Heart left ventricle (tissue), 16 donors: ENCODE measurements at regions of chr19 and their contacts with region 1.

Region 1: GRCh38 chr19:51473009-51473707 is 5.2 kb upstream of the CEACAM18 start:
- DNase-seq: peak in 4 of 5 donors; percentile 70 to 77 (median 72)
- ATAC-seq: peak; percentile 67 to 82 (median 78)
- H3K4me3 ChIP-seq: no peak overlapping the region
- H3K27ac ChIP-seq: no peak overlapping the region
- H3K4me1 ChIP-seq: peaks cover 0 to under 1% (median 0%) of the 10 kb centered on the region in 12 donors
- H3K27me3 ChIP-seq: peaks cover 0 to 38% (median 8%) of the 10 kb centered on the region in 9 donors
- CTCF ChIP-seq: peak; percentile 77 to 97 (median 86)
- POLR2A ChIP-seq: no peak

Region 2: GRCh38 chr19:51407511-51408131 is 65.5 kb before region 1 on chr19:
- intact Hi-C with region 1: no loop called
- DNase-seq: no peak
- ATAC-seq: peak in 2 of 4 donors; percentile 33 to 72
- H3K4me3 ChIP-seq: no peak overlapping the region
- H3K27ac ChIP-seq: peak overlapping the region in 1 of 12 donors; percentile 75
- H3K4me1 ChIP-seq: peaks cover 0 to 27% (median 0%) of the 10 kb centered on the region in 12 donors
- H3K27me3 ChIP-seq: peaks cover 0 to 3% (median 0%) of the 10 kb centered on the region in 9 donors
- CTCF ChIP-seq: peak in 8 of 12 donors; percentile 15 to 36 (median 24)
- POLR2A ChIP-seq: no peak

Region 3: GRCh38 chr19:51651216-51651846 is 178.2 kb after region 1 on chr19:
- intact Hi-C with region 1: loop called in 6 of 10 experiments (anchors 2 to 5 kb)
- DNase-seq: peak in 2 of 5 donors; percentile 31 to 32
- ATAC-seq: peak in 3 of 4 donors; percentile 28 to 78 (median 28)
- H3K4me3 ChIP-seq: no peak overlapping the region
- H3K27ac ChIP-seq: peak overlapping the region in 1 of 12 donors; percentile 12
- H3K4me1 ChIP-seq: peaks cover 0 to 23% (median 0%) of the 10 kb centered on the region in 12 donors
- H3K27me3 ChIP-seq: peaks cover 0 to 29% (median 0%) of the 10 kb centered on the region in 9 donors
- CTCF ChIP-seq: no peak
- POLR2A ChIP-seq: no peak

Region 4: GRCh38 chr19:51660975-51661600 is 187.9 kb after region 1 on chr19:
- intact Hi-C with region 1: loop called in 9 of 10 experiments (anchors 1 to 5 kb)
- DNase-seq: peak; percentile 70 to 79 (median 76)
- ATAC-seq: peak in 3 of 4 donors; percentile 68 to 86 (median 69)
- H3K4me3 ChIP-seq: no peak overlapping the region
- H3K27ac ChIP-seq: no peak overlapping the region
- H3K4me1 ChIP-seq: peaks cover 0 to 8% (median 0%) of the 10 kb centered on the region in 12 donors
- H3K27me3 ChIP-seq: peaks cover 0 to 40% (median 8%) of the 10 kb centered on the region in 9 donors
- CTCF ChIP-seq: peak; percentile 49 to 72 (median 59)
- POLR2A ChIP-seq: no peak

Region 5: GRCh38 chr19:51784922-51785690 is 311.9 kb after region 1 on chr19:
- intact Hi-C with region 1: loop called in 1 of 10 experiments (anchors 10 kb)
- DNase-seq: peak; percentile 62 to 82 (median 69)
- ATAC-seq: peak; percentile 44 to 91 (median 86)
- H3K4me3 ChIP-seq: no peak overlapping the region
- H3K27ac ChIP-seq: peak overlapping the region in 9 of 12 donors; percentile 9 to 87 (median 49)
- H3K4me1 ChIP-seq: peaks cover 0 to 71% (median 5%) of the 10 kb centered on the region in 12 donors
- H3K27me3 ChIP-seq: no peaks in the 10 kb centered on the region
- CTCF ChIP-seq: no peak
- POLR2A ChIP-seq: no peak